ENCODE measurements at regions of chr11 and their contacts with region 1.

Region 1: DNA sequence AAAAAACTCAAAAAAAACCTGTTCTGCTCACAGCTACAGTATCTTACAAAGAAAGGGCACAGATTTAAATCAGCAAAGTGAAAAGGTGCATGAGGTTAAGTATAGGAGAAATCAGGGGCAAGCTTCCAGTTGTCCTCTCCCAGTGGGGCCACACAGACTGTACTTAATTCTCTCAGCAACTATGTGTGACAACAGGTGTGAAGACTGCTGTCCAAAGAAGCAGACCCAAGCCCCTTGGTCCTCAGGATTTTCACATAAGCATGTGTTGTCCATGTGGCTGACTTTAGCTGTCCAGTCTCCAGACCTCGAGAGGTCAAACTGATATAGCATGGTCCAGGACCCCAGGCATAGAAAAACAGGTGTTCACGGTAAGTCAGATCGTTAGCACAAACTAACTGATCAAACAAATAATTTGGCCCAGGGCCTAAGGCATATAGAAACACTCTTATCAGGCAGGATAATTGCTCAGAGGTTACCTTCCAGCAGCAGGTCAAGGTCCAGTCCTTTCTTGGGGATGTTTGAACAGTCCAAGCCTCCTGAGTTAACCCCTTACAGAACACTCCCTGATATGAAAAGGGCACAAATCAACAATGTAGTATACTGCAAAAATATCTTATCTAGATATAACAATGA is 21.1 kb upstream of the CSTF3 start:
- DNase-seq: no peak
- H3K4me3 ChIP-seq: no peak overlapping the region
- H3K27ac ChIP-seq: no peak overlapping the region
- H3K4me1 ChIP-seq: no peaks in the 10 kb centered on the region
- CTCF ChIP-seq: no peak

Region 2: GRCh38 chr11:33248416-33248971 is 66.1 kb after region 1 on chr11:
- CTCF ChIA-PET with region 1: no interaction called
- POLR2A ChIA-PET with region 1: no interaction called
- intact Hi-C with region 1: loop called (anchors 5 kb)
- DNase-seq: no peak
- H3K4me3 ChIP-seq: no peak overlapping the region
- H3K27ac ChIP-seq: no peak overlapping the region
- H3K4me1 ChIP-seq: no peaks in the 10 kb centered on the region
- CTCF ChIP-seq: no peak

Measured in OCI-LY7 (cell line).